ENCODE measurements at regions of chr5 and their contacts with region 1.

Region 1: GRCh38 chr5:172902497-172903200 is 56.6 kb upstream of the RPL26L1 start:
- DNase-seq: peak; percentile 97
- H3K4me3 ChIP-seq: no peak overlapping the region
- H3K27ac ChIP-seq: peak overlapping the region; percentile 87 to 96 (median 90)
- H3K4me1 ChIP-seq: peaks cover 0 to 85% (median 84%) of the 10 kb centered on the region in 4 donors
- H3K27me3 ChIP-seq: no peaks in the 10 kb centered on the region
- CTCF ChIP-seq: peak in 2 of 4 experiments; percentile 15 to 59
- EP300 ChIP-seq: peak; percentile 43 to 100 (median 86)
- POLR2A ChIP-seq: no peak

Region 2: DNA sequence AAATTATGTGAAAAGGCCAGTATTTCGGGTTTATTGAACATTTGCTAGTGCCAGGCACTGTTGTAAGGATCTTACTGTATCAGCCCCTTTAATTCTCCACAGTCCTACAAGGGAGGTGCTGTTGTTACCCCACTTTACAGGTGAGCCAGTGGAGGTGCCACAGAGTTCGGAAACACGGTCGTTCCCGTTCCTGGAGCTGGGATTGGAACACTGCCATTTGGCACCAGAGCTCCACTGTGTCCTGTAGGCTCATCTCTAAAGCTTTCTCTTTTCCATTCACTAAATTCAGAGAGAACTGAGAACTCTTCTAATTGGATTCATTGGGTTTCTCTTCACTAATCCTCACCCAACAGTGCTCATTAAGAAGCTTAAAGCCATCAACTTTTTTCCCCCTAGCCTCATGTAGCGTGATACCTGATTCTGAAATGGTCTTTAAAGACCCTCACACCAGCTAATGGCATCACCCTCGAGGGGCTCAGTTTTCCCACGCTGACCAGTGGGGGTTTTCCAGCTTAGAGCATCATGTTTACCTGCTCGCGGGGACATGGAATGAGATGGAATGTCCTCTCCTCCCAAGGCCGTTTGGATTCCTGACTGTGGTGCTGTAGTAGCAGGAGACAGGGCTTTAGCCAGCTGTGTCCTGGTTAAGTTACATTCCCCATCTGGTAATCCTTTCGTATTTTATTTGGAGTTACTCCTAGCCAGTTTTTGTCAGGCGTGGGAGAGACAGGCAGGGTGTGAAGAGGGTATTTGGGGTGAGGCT is 62.8 kb before region 1 on chr5:
- intact Hi-C with region 1: loop called (anchors 1 kb)
- DNase-seq: no peak
- H3K4me3 ChIP-seq: no peak overlapping the region
- H3K27ac ChIP-seq: peak overlapping the region; percentile 76 to 96 (median 92)
- H3K4me1 ChIP-seq: peaks cover 0 to 63% (median 55%) of the 10 kb centered on the region in 4 donors
- H3K27me3 ChIP-seq: no peaks in the 10 kb centered on the region
- CTCF ChIP-seq: no peak
- EP300 ChIP-seq: peak in 2 of 4 donors; percentile 49 to 76
- POLR2A ChIP-seq: no peak